Naive thymus-derived CD4-positive, alpha-beta T cell (primary cell): ENCODE measurements at regions of chr18 and their contacts with region 1.

Region 1: DNA sequence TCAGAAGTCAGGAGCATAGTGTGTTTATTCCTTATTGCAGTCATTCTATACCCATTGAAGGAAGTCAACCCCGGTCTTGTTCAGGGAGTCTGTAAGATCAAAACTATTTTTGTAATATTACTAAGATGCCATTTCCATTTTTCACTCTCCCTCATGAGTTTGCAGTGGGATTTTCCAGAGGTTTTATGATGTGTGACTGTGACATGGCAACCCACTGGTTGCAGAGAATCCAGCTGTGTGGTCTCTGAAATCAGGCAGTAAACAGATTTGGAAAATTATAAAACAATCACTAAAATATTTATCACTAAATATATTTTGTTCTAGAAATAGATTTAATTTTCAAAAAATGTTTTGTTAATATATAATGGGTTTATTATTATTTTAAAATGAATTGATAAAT is 38.1 kb downstream of the DLGAP1 start:
- DNase-seq: no peak
- ATAC-seq: no peak
- H3K4me3 ChIP-seq: no peak overlapping the region
- H3K4me3 Mint-ChIP-seq: no peak overlapping the region
- H3K27ac ChIP-seq: no peak overlapping the region
- H3K27ac Mint-ChIP-seq: no peak overlapping the region
- H3K4me1 ChIP-seq: no peaks in the 10 kb centered on the region
- H3K4me1 Mint-ChIP-seq: no peaks in the 10 kb centered on the region
- H3K27me3 ChIP-seq: no peaks in the 10 kb centered on the region
- H3K27me3 Mint-ChIP-seq: no peaks in the 10 kb centered on the region

Region 2: DNA sequence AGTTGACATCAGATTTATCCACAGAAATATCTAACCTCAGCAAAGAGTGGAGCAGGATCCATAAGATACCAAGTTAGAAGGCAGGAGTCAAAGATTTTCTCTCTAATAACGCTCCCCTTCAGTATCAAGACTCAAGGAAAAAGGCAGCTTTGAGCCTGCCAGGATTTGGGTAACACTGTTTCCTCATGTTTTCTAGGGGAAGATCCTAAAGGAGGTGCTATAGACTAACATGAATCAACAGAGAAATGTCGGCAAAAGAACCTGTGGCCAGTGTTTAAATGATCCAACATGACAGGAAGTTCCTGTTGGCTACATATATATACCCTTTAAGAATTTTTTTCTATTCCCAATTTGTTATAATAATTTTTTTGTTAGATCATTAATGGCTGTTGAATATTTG is 564.7 kb before region 1 on chr18:
- CTCF ChIA-PET with region 1: no interaction called
- POLR2A ChIA-PET with region 1: no interaction called
- intact Hi-C with region 1: no loop called
- DNase-seq: no peak
- ATAC-seq: no peak
- H3K4me3 ChIP-seq: no peak overlapping the region
- H3K4me3 Mint-ChIP-seq: no peak overlapping the region
- H3K27ac ChIP-seq: no peak overlapping the region
- H3K27ac Mint-ChIP-seq: no peak overlapping the region
- H3K4me1 ChIP-seq: no peaks in the 10 kb centered on the region
- H3K4me1 Mint-ChIP-seq: no peaks in the 10 kb centered on the region
- H3K27me3 ChIP-seq: peaks cover 0 to 2% of the 10 kb centered on the region in 2 donors
- H3K27me3 Mint-ChIP-seq: peaks cover 0 to 13% (median 7%) of the 10 kb centered on the region in 5 donors

Region 3: DNA sequence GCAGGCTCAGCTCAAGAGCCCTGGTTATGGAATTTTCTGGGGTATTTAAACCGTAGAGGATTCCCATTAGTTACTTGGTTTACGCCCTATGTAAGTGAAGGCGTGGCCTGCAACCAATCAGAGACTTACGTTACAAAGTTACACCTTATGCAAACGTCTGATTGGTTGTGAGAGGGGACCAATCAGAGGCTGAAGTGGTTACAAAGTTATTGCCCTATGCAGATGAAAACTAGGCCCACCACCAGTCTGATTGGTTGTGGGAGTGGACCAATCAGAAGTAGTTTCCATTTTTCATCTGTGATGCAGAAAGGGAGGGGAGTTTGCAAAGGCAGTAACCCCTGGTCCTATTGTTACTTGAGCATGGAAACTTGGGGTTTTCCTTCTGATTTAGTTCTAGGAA is 11.0 kb before region 1 on chr18:
- CTCF ChIA-PET with region 1: no interaction called
- POLR2A ChIA-PET with region 1: no interaction called
- intact Hi-C with region 1: loop called in 1 of 2 experiments (anchors 2 kb)
- DNase-seq: no peak
- ATAC-seq: no peak
- H3K4me3 ChIP-seq: no peak overlapping the region
- H3K4me3 Mint-ChIP-seq: no peak overlapping the region
- H3K27ac ChIP-seq: no peak overlapping the region
- H3K27ac Mint-ChIP-seq: no peak overlapping the region
- H3K4me1 ChIP-seq: no peaks in the 10 kb centered on the region
- H3K4me1 Mint-ChIP-seq: no peaks in the 10 kb centered on the region
- H3K27me3 ChIP-seq: no peaks in the 10 kb centered on the region
- H3K27me3 Mint-ChIP-seq: peaks cover 0 to 4% (median 0%) of the 10 kb centered on the region in 5 donors